PC-9 (cell line): ENCODE measurements at regions of chr5 and their contacts with region 1.

Region 1: GRCh38 chr5:57193757-57194413 is 20.0 kb downstream of the GPBP1 start:
- DNase-seq: no peak
- H3K4me3 ChIP-seq: no peak overlapping the region
- H3K27ac ChIP-seq: no peak overlapping the region
- H3K4me1 ChIP-seq: peaks cover 5% of the 10 kb centered on the region; the same call in 1 of the 2 replicates
- H3K27me3 ChIP-seq: no peaks in the 10 kb centered on the region
- CTCF ChIP-seq: no peak

Region 2: GRCh38 chr5:56565644-56566043 is 628.2 kb before region 1 on chr5:
- CTCF ChIA-PET with region 1: no interaction called
- POLR2A ChIA-PET with region 1: no interaction called
- intact Hi-C with region 1: no loop called
- DNase-seq: no peak
- H3K4me3 ChIP-seq: no peak overlapping the region
- H3K27ac ChIP-seq: no peak overlapping the region
- H3K4me1 ChIP-seq: peaks cover 23% of the 10 kb centered on the region
- H3K27me3 ChIP-seq: no peaks in the 10 kb centered on the region
- CTCF ChIP-seq: no peak

Region 3: DNA sequence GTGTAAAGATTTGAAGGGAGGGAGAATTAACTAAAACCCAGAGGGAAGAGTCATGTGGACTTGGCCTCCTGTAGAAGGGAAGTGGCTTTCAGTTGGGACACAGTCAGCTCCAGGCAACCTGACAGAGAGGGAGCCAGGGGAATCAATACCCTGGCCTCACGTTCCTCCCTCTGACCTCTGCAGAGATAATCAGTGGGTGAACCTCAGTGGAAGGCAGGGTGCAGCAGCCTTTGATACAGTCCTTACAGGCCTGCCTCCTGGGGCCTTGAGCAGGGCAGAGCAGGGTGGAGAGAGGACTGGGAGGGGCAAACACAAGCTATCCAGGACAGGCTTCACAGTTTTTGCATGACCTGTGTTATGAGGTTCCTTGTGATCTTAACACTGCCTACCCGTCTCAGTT is 81.9 kb before region 1 on chr5:
- CTCF ChIA-PET with region 1: no interaction called
- POLR2A ChIA-PET with region 1: interaction called, 18 read pairs
- intact Hi-C with region 1: no loop called
- DNase-seq: no peak
- H3K4me3 ChIP-seq: no peak overlapping the region
- H3K27ac ChIP-seq: no peak overlapping the region
- H3K4me1 ChIP-seq: no peaks in the 10 kb centered on the region
- H3K27me3 ChIP-seq: no peaks in the 10 kb centered on the region
- CTCF ChIP-seq: no peak

Region 4: DNA sequence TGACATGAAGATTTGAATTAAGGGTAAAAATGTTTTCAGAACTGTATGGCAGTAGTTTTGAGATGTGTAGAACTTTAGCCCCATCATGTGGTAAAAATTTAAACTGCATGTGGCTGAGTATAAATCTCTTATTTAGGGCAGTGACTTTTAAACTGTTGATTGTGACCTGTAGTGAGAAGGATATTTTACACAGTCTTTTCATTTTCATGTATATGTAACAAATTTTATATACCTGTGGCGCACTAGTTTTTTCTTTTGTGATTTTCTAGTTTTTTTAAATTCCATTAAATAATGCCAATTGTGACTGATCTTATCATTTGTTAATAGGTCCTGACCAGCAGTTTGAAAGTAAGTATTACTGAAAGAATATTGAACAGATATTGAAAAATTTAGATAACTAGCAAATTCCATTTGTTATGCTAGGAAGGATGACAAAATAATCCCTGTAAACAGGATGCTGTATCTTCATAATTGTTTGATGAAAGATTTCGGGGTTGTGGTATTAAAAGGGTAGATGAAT is 27.2 kb after region 1 on chr5:
- CTCF ChIA-PET with region 1: interaction called, 15 read pairs
- POLR2A ChIA-PET with region 1: no interaction called
- intact Hi-C with region 1: no loop called
- DNase-seq: peak in 1 of 2 experiments; percentile 59
- H3K4me3 ChIP-seq: no peak overlapping the region
- H3K27ac ChIP-seq: peak overlapping the region; percentile 38; the same call in 1 of the 2 replicates
- H3K4me1 ChIP-seq: peaks cover 32% of the 10 kb centered on the region
- H3K27me3 ChIP-seq: no peaks in the 10 kb centered on the region
- CTCF ChIP-seq: peak; percentile 91

Region 5: DNA sequence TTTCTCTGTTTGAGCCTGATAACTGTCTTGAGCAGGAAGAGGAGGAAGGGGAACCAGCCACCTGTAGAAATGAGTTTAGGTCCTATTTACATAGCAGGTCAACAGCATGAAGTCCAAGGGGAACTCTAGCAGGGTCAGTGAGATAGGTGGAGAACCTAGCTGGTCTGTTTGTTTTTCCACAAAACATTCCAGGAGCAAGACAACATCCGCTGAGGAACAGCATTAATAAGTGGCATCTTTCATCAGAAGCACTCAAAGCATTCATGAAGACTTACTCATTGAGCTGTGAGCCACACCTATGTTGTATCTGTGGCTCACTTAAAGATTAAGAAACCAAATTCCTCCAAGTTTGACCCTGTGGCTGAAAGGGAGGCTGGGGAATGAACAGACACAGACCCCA is 172.9 kb after region 1 on chr5:
- CTCF ChIA-PET with region 1: no interaction called
- POLR2A ChIA-PET with region 1: no interaction called
- intact Hi-C with region 1: no loop called
- DNase-seq: peak; percentile 55 to 98
- H3K4me3 ChIP-seq: no peak overlapping the region
- H3K27ac ChIP-seq: peak overlapping the region; percentile 92
- H3K4me1 ChIP-seq: peaks cover 58% of the 10 kb centered on the region
- H3K27me3 ChIP-seq: no peaks in the 10 kb centered on the region
- CTCF ChIP-seq: no peak